GM13977 (cell line): ENCODE measurements at regions of chr14 and their contacts with region 1.

Region 1: DNA sequence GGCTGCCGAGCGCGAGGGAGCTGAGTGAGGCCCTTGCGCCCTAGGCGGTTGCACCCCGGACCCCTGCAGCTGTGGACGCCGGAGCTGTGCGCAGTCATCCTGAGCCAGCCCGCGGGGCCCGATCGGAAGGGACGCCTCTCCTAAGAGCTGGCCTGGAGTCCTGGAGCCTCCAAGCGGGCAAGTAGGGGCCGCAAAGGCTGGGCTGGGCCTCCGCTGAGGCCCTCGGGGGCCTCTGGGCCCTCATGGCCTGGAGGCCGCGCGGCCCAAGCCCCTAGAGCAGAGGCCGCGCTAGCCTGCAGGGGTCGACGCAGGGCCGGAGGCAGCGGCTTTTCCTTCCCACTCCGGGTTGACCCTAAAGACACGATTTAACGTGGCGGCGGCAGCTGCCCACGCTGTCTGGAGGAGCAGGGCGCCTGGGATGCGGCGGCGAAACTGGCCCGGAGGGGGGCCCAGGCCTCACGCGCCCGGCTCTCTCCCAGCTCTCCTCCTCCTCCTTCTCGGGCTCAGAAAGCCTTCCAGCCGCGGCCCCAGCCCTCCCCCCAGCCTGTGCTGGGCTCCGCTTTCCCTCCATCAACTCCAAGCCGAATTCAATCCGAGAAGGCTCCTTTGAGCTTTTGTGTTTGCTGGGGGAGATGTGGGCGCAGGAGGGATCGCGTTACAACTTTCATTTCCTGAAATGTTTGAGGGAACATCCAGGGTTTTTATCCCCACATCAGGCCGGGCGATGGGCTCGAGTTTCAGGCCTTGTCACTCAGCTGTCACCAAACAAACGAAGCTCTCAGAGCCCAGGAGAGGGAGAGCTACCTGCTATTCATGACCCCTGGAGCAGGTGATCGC is 11.6 kb downstream of the SIX1 start:
- DNase-seq: no peak
- CTCF ChIP-seq: no peak

Region 2: DNA sequence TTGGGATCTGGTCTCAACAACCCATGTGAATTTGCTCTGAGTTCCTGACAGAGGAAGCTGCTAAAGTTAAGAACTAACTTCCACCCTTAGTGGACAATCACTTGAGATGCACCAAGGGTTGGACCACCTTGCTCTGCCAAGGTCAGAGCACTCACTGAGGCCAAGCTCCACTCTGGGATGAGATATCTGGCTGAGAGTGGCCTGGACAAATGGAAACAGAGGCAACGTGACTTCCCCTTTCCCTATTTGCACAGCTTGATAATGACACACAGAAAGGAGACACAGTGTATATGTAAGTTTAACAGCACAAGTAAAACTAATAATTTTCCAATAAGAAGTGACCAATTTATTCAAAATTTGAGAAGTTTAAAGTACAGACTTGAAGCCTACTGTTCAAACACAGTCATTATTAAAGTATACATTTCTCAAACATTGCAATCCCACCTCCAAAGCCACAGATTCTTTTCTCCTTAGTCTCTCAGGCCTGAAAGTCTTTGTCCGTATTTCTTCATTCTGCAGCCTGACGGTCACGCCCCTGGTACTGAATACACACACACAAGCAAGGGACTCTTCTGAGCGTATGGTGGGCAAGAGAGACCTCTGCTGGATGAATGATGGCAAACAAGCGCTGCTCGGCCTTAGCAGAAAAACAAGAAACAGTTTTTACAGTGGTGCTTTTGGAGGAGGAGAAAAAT is 614.8 kb after region 1 on chr14:
- in situ Hi-C with region 1: loop called (anchors 10 kb)
- DNase-seq: peak; percentile 66
- CTCF ChIP-seq: peak; percentile 85